Dorsolateral prefrontal cortex (tissue), 120 donors: ENCODE measurements at regions of chr19 and their contacts with region 1.

Region 1: GRCh38 chr19:50357178-50358100 is 8.0 kb downstream of the NAPSA start:
- DNase-seq: peak; percentile 75 to 92 (median 86)
- H3K4me3 ChIP-seq: peak overlapping the region; percentile 38 to 78 (median 64)
- H3K27ac ChIP-seq: peak overlapping the region; percentile 32 to 97 (median 90)
- H3K27me3 ChIP-seq: no peaks in the 10 kb centered on the region
- CTCF ChIP-seq: peak; percentile 75 to 96 (median 90)

Region 2: GRCh38 chr19:50376166-50377050 is 19.0 kb after region 1 on chr19 and contains the start of gene NR1H2:
- intact Hi-C with region 1: no loop called
- DNase-seq: peak; percentile 94 to 97 (median 96)
- H3K4me3 ChIP-seq: peak within 1 kb of the TSS; percentile 73 to 100 (median 98)
- H3K27ac ChIP-seq: peak within 1 kb of the TSS; percentile 86 to 100 (median 97)
- H3K27me3 ChIP-seq: no peaks in the 10 kb centered on the region
- CTCF ChIP-seq: peak in 36 of 56 donors; percentile 3 to 57 (median 32)
- total RNA-seq, gene NR1H2: 47.4 to 83.8 (median 64.3) TPM

Region 3: GRCh38 chr19:50922317-50922853 is 564.9 kb after region 1 on chr19:
- intact Hi-C with region 1: loop called in 1 of 2 experiments (anchors 2 kb)
- DNase-seq: peak; percentile 38 to 83 (median 70)
- H3K4me3 ChIP-seq: peak overlapping the region in 1 of 59 donors; percentile 1
- H3K27ac ChIP-seq: no peak overlapping the region
- H3K27me3 ChIP-seq: peaks cover 0 to 63% (median 23%) of the 10 kb centered on the region in 45 donors
- CTCF ChIP-seq: peak; percentile 53 to 92 (median 86)